ENCODE measurements at regions of chr1 and their contacts with region 1.

Region 1: DNA sequence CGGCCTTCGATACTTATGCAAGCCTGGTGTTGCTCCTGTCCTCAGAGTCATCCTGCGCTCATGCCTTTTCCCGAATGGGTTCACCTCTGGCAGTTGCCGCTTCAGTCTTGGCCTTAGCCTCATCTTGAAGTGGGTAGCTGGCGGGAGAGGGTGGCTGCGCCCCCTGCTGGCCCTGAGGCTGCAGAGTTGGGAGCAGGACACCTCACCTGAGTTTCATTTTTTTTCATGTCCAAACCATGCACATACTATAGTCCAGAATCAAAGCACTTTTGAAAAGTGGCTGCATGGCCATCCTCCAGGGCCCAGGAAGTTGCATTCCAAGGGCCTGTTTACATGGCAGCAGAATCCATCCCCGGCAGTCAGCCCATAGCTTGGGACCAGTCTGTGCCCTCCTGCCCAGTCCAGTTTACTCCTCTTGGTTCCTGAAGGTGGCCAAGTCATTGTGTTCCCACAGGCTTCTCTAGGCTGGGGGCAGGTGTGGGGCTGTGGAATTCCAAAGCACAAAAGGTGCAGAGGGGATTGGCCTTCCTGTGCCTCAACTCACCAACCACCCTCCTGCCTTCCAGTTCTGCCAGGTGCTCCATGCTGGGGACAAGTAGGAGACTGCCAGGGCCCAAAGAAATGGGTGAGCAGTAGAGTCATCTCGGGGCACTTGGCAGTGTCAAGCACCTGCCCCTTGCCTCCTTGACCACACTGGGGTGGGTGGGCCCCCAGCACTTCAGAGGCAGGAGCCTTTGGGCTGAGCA is 44.0 kb downstream of the YARS1 start:
- DNase-seq: no peak
- H3K4me3 ChIP-seq: no peak overlapping the region
- H3K27me3 ChIP-seq: no peaks in the 10 kb centered on the region
- CTCF ChIP-seq: peak; percentile 95

Region 2: DNA sequence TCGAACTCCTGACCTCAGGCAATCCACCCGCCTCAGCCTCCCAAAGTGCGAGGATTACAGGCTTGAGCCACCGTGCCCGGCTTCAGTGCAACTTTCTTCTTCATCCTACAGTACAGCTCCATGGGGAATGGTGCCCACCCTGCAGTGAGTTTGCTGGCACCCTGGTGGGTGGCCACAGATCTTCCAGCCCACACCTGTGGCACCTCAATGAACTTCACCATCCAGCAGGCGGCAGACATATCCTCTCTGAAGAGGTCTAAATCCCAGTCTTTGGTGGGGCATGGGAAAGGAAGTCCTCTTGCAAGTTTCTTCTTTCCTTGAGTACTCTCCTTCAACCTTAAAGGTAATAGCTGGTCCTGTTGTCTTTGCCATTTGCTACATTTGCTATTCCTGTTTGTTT is 252.0 kb before region 1 on chr1:
- CTCF ChIA-PET with region 1: interaction called, 39 read pairs
- POLR2A ChIA-PET with region 1: interaction called, 3 read pairs
- DNase-seq: no peak
- H3K4me3 ChIP-seq: no peak overlapping the region
- H3K27me3 ChIP-seq: no peaks in the 10 kb centered on the region
- CTCF ChIP-seq: no peak

Region 3: GRCh38 chr1:32666901-32667566 is 106.2 kb before region 1 on chr1:
- CTCF ChIA-PET with region 1: no interaction called
- POLR2A ChIA-PET with region 1: no interaction called
- DNase-seq: no peak
- H3K4me3 ChIP-seq: no peak overlapping the region
- H3K27me3 ChIP-seq: no peaks in the 10 kb centered on the region
- CTCF ChIP-seq: no peak

Region 4: GRCh38 chr1:32702599-32703478 is 70.4 kb before region 1 on chr1 and contains the start of gene SYNC:
- CTCF ChIA-PET with region 1: interaction called, 44 read pairs
- POLR2A ChIA-PET with region 1: no interaction called
- DNase-seq: peak; percentile 31
- H3K4me3 ChIP-seq: peak within 1 kb of the TSS; percentile 76
- H3K27me3 ChIP-seq: no peaks in the 10 kb centered on the region
- CTCF ChIP-seq: no peak
- polyA plus RNA-seq, gene SYNC: 57.3 and 60.5 TPM in 2 replicates

Region 5: DNA sequence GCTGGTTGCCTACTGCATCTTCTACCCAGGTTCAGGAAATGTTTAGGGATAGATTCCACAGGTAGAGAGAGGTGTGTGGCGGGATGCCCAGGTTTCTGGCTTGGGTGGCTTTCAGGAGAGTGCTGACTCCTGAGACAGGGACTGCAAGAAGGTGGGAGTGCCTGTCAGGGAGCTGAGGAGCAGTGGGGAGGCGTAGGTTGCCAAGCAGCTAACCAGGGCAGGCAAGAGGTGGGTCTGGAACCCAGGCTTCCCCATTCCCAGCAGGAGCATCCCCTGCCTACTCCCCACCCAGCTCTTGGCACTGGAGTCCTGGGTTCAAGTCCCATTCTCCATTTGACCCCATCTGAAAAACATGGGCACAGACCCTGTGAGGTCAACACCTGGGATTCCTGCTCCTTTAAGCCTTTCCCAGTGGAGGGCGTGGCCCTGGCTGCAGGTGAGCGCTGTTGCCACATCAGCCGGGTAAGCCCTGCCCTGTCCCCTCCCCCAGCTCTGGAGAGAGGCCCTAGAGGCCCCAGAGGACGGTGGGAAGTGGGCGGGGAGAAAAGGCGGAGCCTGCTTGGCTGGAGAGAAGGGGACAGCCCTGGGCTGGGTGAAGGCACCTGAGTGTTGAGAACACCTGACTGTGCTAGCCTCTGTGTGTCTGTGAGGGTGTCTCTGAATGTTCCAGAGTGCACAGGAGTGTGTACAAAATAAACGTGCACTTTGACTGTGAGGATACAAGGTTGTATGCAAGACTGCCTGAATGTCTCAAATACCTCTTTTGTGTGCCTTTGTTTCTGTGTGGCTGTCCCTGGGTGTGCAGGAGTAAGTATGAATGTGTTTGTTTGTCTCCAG is 56.7 kb before region 1 on chr1:
- CTCF ChIA-PET with region 1: interaction called, 104 read pairs
- POLR2A ChIA-PET with region 1: interaction called, 3 read pairs
- DNase-seq: no peak
- H3K4me3 ChIP-seq: no peak overlapping the region
- H3K27me3 ChIP-seq: no peaks in the 10 kb centered on the region
- CTCF ChIP-seq: no peak

Region 6: GRCh38 chr1:32753532-32754312 is 19.5 kb before region 1 on chr1:
- CTCF ChIA-PET with region 1: interaction called, 11 read pairs
- POLR2A ChIA-PET with region 1: no interaction called
- DNase-seq: no peak
- H3K4me3 ChIP-seq: peak overlapping the region; percentile 46
- H3K27me3 ChIP-seq: peaks cover 2% of the 10 kb centered on the region
- CTCF ChIP-seq: no peak

Region 7: DNA sequence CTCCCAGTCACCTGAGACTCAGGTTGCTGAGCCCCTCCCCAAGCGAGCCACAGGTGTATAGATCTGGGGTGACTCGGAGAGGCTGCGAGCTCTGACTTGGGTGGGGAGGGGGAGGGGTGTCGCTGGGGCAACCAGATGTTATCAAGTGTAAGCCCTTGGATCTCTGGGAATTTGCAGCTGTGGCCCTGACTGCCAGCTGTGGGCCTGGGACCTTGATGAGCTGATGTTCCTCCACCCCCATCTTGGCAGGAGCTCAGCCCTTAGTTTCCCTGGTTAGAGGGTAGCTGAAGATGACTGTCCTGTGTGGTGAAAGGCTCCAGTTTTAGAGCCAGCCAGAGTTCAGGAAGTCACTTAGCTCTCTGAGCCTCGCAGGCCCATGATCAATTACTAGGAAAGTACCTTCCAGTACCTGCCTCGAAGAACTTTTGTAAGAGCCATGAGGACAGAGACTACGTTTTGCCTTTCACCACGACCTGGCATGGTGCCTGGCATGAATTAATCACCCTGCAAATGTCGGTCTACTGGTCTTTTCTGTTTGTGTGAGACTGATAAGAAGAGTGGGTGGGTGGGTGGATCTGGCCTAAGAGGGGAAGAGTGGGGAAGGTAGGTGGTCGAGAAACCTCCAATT is 11.8 kb before region 1 on chr1:
- CTCF ChIA-PET with region 1: interaction called, 36 read pairs
- POLR2A ChIA-PET with region 1: no interaction called
- DNase-seq: no peak
- H3K4me3 ChIP-seq: no peak overlapping the region
- H3K27me3 ChIP-seq: no peaks in the 10 kb centered on the region
- CTCF ChIP-seq: no peak

Measured in BJ (cell line).